CD4-positive, alpha-beta memory T cell (primary cell): ENCODE measurements at regions of chr3 and their contacts with region 1.

Region 1: GRCh38 chr3:114213627-114214541 is 23.5 kb downstream of the ZNF80 start:
- DNase-seq: peak; percentile 74 to 92 (median 79)
- H3K4me3 ChIP-seq: peak overlapping the region; percentile 26 to 58
- H3K4me3 Mint-ChIP-seq: no peak overlapping the region
- H3K27ac ChIP-seq: peak overlapping the region; percentile 86
- H3K27ac Mint-ChIP-seq: no peak overlapping the region
- H3K4me1 ChIP-seq: peaks cover 71% of the 10 kb centered on the region
- H3K4me1 Mint-ChIP-seq: peaks cover 0 to 20% (median 7%) of the 10 kb centered on the region in 4 donors
- H3K27me3 ChIP-seq: no peaks in the 10 kb centered on the region
- H3K27me3 Mint-ChIP-seq: no peaks in the 10 kb centered on the region

Region 2: DNA sequence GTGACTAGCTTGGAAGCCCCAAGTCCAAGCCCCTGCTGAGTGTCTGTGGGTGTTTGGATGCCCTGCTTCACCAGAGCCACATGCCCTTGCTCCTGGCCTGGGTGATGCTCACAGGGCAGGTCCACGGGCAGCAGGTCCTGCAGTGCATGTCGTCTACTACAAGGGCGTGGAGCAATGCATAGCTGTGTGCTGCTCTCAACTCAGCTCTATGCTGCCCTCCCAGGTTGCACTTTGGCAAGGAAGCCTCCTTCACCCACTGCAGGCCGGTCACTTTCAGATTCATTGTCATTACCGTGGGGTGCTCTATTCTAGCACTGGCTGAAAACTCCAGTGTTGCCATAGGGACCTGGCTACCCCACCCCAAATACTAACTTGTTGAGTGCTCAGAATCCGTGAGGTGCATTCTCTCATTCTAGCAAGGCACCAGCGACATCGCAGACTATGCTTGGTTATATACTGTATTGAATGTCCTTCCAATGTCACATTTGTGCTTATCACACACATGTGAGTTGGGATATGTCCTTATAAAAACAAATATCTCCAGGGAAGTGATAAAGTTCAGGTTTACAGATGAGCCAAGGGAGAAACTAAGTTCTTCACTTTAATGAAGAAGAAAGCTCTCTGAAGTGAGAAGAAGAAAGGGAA is 323.5 kb before region 1 on chr3:
- CTCF ChIA-PET with region 1: no interaction called
- POLR2A ChIA-PET with region 1: no interaction called
- intact Hi-C with region 1: no loop called
- DNase-seq: no peak
- H3K4me3 ChIP-seq: no peak overlapping the region
- H3K4me3 Mint-ChIP-seq: no peak overlapping the region
- H3K27ac ChIP-seq: no peak overlapping the region
- H3K27ac Mint-ChIP-seq: no peak overlapping the region
- H3K4me1 ChIP-seq: no peaks in the 10 kb centered on the region
- H3K4me1 Mint-ChIP-seq: no peaks in the 10 kb centered on the region
- H3K27me3 ChIP-seq: no peaks in the 10 kb centered on the region
- H3K27me3 Mint-ChIP-seq: no peaks in the 10 kb centered on the region

Region 3: GRCh38 chr3:114056130-114057010 is 157.5 kb before region 1 on chr3 and contains the starts of genes CCDC191 and QTRT2:
- CTCF ChIA-PET with region 1: no interaction called
- POLR2A ChIA-PET with region 1: interaction called, 6 read pairs
- intact Hi-C with region 1: loop called (anchors 5 kb)
- DNase-seq: peak; percentile 97 to 99 (median 98)
- H3K4me3 ChIP-seq: peak within 1 kb of the TSS; percentile 78 to 93
- H3K4me3 Mint-ChIP-seq: peak within 1 kb of the TSS; percentile 95 to 100 (median 99)
- H3K27ac ChIP-seq: peak within 1 kb of the TSS; percentile 86
- H3K27ac Mint-ChIP-seq: peak within 1 kb of the TSS; percentile 93 to 100 (median 99)
- H3K4me1 ChIP-seq: peaks cover 26% of the 10 kb centered on the region
- H3K4me1 Mint-ChIP-seq: peaks cover 21 to 57% (median 38%) of the 10 kb centered on the region in 4 donors
- H3K27me3 ChIP-seq: no peaks in the 10 kb centered on the region
- H3K27me3 Mint-ChIP-seq: peaks cover 0 to 2% of the 10 kb centered on the region in 2 donors
- total RNA-seq, gene CCDC191: 5.7 to 7.1 TPM
- total RNA-seq, gene QTRT2: 29.4 to 35.7 TPM

Region 4: GRCh38 chr3:114231616-114232015 is 17.7 kb after region 1 on chr3:
- CTCF ChIA-PET with region 1: interaction called, 44 read pairs
- POLR2A ChIA-PET with region 1: interaction called, 236 read pairs
- intact Hi-C with region 1: loop called (anchors 1 kb)
- DNase-seq: peak; percentile 46 to 73 (median 61)
- H3K4me3 ChIP-seq: peak overlapping the region in 1 of 2 donors; percentile 27
- H3K4me3 Mint-ChIP-seq: peak overlapping the region; percentile 2 to 85 (median 77)
- H3K27ac ChIP-seq: peak overlapping the region; percentile 45
- H3K27ac Mint-ChIP-seq: peak overlapping the region; percentile 91 to 96 (median 95)
- H3K4me1 ChIP-seq: peaks cover 96% of the 10 kb centered on the region
- H3K4me1 Mint-ChIP-seq: peaks cover 65 to 76% (median 68%) of the 10 kb centered on the region in 4 donors
- H3K27me3 ChIP-seq: no peaks in the 10 kb centered on the region
- H3K27me3 Mint-ChIP-seq: no peaks in the 10 kb centered on the region

Region 5: DNA sequence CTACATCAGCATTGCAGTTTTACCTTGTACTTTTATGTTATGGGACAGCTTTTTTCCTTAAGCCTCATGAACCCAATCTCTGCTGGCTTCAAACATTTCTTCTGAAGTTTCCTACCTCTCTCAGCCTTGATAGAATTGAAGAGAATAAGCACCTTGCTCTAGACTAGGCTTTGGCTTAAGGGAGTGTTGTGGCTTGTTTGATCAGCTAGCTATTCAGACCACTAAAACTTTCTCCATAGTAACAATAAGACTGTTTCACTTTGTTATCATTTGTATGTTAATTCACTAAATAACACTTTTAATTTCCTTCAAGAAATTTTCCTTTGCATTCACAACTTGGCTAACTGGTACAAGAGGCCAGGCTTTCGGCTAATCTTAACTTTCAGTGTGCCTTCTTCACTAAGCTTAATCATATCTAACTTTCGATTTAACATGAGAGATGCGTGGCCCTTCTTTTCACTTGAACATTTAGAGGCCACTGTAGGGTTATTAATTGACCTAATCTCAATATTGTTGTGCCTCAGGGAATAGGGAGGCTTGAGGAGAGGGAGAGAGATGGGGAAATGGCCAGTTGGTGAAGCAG is 71.9 kb after region 1 on chr3:
- CTCF ChIA-PET with region 1: interaction called, 138 read pairs
- POLR2A ChIA-PET with region 1: interaction called, 309 read pairs
- intact Hi-C with region 1: no loop called
- DNase-seq: peak in 3 of 5 donors; percentile 29 to 43 (median 37)
- H3K4me3 ChIP-seq: peak overlapping the region in 1 of 2 donors; percentile 21
- H3K4me3 Mint-ChIP-seq: peak overlapping the region; percentile 21 to 88 (median 86)
- H3K27ac ChIP-seq: peak overlapping the region; percentile 50
- H3K27ac Mint-ChIP-seq: peak overlapping the region; percentile 90 to 96 (median 95)
- H3K4me1 ChIP-seq: peaks cover 25% of the 10 kb centered on the region
- H3K4me1 Mint-ChIP-seq: peaks cover 11 to 29% (median 24%) of the 10 kb centered on the region in 4 donors
- H3K27me3 ChIP-seq: no peaks in the 10 kb centered on the region
- H3K27me3 Mint-ChIP-seq: no peaks in the 10 kb centered on the region

Region 6: DNA sequence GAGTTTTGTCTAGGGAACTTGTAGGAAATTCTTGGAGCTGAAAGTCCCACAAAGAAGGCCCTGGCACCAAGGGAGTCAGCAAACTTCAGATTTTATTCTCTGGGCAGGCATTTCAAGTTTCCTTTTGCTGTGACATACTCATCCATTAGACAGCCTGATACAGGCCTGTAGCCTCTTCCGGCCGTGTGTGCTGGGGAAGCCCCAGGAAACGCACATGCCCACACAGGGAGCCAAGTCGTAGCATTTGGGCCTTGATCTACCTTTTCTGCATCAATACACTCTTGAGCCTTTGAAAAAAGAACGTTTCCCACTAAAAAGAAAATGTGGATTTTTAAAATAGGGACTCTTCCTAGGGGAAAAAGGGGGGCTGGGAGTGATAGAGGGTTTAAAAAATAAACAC is 94.9 kb after region 1 on chr3:
- CTCF ChIA-PET with region 1: interaction called, 18 read pairs
- POLR2A ChIA-PET with region 1: interaction called, 72 read pairs
- intact Hi-C with region 1: loop called (anchors 1 kb)
- DNase-seq: peak; percentile 68 to 83 (median 72)
- H3K4me3 ChIP-seq: peak overlapping the region in 1 of 2 donors; percentile 12
- H3K4me3 Mint-ChIP-seq: peak overlapping the region; percentile 37 to 88 (median 68)
- H3K27ac ChIP-seq: peak overlapping the region; percentile 88
- H3K27ac Mint-ChIP-seq: peak overlapping the region; percentile 92 to 98 (median 95)
- H3K4me1 ChIP-seq: peaks cover 72% of the 10 kb centered on the region
- H3K4me1 Mint-ChIP-seq: peaks cover 53 to 66% (median 59%) of the 10 kb centered on the region in 4 donors
- H3K27me3 ChIP-seq: no peaks in the 10 kb centered on the region
- H3K27me3 Mint-ChIP-seq: no peaks in the 10 kb centered on the region

Region 7: GRCh38 chr3:114418724-114419543 is 205.1 kb after region 1 on chr3:
- CTCF ChIA-PET with region 1: interaction called, 20 read pairs
- POLR2A ChIA-PET with region 1: interaction called, 14 read pairs
- intact Hi-C with region 1: loop called (anchors 1 kb)
- DNase-seq: peak; percentile 51 to 68 (median 65)
- H3K4me3 ChIP-seq: no peak overlapping the region
- H3K4me3 Mint-ChIP-seq: no peak overlapping the region
- H3K27ac ChIP-seq: no peak overlapping the region
- H3K27ac Mint-ChIP-seq: peak overlapping the region in 2 of 7 donors; percentile 11 to 19
- H3K4me1 ChIP-seq: peaks cover 3% of the 10 kb centered on the region
- H3K4me1 Mint-ChIP-seq: peaks cover 3 to 7% (median 5%) of the 10 kb centered on the region in 4 donors
- H3K27me3 ChIP-seq: no peaks in the 10 kb centered on the region
- H3K27me3 Mint-ChIP-seq: no peaks in the 10 kb centered on the region